Heart left ventricle (tissue), 16 donors: ENCODE measurements at regions of chr5 and their contacts with region 1.

Region 1: GRCh38 chr5:98464737-98465330 is 308.6 kb upstream of the RGMB start:
- DNase-seq: no peak
- ATAC-seq: no peak
- H3K4me3 ChIP-seq: no peak overlapping the region
- H3K27ac ChIP-seq: no peak overlapping the region
- H3K4me1 ChIP-seq: no peaks in the 10 kb centered on the region
- H3K27me3 ChIP-seq: no peaks in the 10 kb centered on the region
- CTCF ChIP-seq: no peak
- POLR2A ChIP-seq: no peak

Region 2: DNA sequence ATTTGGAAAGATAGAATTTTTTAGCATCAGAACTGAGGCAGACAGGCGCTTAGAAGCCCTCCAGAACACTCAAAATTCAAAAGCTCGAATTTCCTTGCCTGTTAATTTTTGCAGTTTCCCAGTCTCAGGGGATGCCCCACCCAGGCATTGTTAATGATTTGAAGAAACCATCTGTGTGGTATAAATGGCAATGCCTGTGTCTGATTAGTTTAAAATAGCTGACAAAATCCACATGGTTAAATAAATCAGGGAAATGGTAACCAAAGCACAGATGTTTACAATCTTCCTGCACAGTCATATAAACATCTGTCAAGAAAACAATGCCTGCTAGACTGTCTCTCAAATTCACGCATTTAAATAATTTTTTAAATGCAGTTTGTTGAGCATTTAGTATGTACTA is 123.4 kb after region 1 on chr5:
- intact Hi-C with region 1: no loop called
- DNase-seq: no peak
- ATAC-seq: no peak
- H3K4me3 ChIP-seq: no peak overlapping the region
- H3K27ac ChIP-seq: no peak overlapping the region
- H3K4me1 ChIP-seq: no peaks in the 10 kb centered on the region
- H3K27me3 ChIP-seq: no peaks in the 10 kb centered on the region
- CTCF ChIP-seq: no peak
- POLR2A ChIP-seq: no peak

Region 3: GRCh38 chr5:99088309-99088708 is 623.5 kb after region 1 on chr5:
- intact Hi-C with region 1: loop called in 1 of 10 experiments (anchors 10 kb)
- DNase-seq: no peak
- ATAC-seq: no peak
- H3K4me3 ChIP-seq: no peak overlapping the region
- H3K27ac ChIP-seq: no peak overlapping the region
- H3K4me1 ChIP-seq: no peaks in the 10 kb centered on the region
- H3K27me3 ChIP-seq: no peaks in the 10 kb centered on the region
- CTCF ChIP-seq: no peak
- POLR2A ChIP-seq: no peak